ENCODE measurements at regions of chr4 and their contacts with region 1.

Region 1: GRCh38 chr4:168710353-168710946 is 213.6 kb downstream of the PALLD start:
- DNase-seq: peak; percentile 54
- H3K4me3 ChIP-seq: no peak overlapping the region
- H3K27ac ChIP-seq: no peak overlapping the region
- H3K4me1 ChIP-seq: peaks cover 33% of the 10 kb centered on the region
- H3K27me3 ChIP-seq: no peaks in the 10 kb centered on the region
- CTCF ChIP-seq: peak; percentile 49 to 74

Region 2: DNA sequence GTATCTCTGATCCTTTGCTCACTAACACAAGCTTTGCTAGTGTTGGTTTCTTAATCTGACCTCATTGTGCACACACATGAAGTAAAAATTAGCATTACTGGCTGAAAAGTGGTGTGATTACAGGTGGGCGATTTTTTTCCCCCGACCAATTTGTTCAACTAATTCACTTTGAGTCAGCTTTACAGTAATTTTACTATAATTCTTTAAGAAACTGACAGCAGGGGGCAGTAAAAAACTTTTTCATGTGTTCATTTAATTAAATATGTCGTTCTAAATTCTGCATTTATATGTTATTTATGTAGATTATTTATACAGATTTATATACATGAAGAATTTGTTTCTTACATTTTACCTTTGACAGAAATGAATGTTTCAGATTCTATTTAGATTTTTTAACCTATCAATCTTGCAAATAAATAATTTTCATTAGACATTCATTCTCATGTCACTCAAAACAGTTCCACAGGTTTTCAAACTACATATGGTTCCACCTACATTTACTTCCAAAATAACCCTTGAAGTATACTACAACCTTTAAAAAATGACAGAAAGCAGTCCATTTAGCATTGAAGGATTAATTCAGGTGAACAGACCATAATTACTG is 196.1 kb before region 1 on chr4:
- CTCF ChIA-PET with region 1: no interaction called
- dilution Hi-C with region 1: no loop called
- in situ Hi-C with region 1: no loop called
- intact Hi-C with region 1: loop called (anchors 5 kb)
- DNase-seq: peak; percentile 24
- H3K4me3 ChIP-seq: no peak overlapping the region
- H3K27ac ChIP-seq: no peak overlapping the region
- H3K4me1 ChIP-seq: no peaks in the 10 kb centered on the region
- H3K27me3 ChIP-seq: no peaks in the 10 kb centered on the region
- CTCF ChIP-seq: peak; percentile 31 to 36

Region 3: DNA sequence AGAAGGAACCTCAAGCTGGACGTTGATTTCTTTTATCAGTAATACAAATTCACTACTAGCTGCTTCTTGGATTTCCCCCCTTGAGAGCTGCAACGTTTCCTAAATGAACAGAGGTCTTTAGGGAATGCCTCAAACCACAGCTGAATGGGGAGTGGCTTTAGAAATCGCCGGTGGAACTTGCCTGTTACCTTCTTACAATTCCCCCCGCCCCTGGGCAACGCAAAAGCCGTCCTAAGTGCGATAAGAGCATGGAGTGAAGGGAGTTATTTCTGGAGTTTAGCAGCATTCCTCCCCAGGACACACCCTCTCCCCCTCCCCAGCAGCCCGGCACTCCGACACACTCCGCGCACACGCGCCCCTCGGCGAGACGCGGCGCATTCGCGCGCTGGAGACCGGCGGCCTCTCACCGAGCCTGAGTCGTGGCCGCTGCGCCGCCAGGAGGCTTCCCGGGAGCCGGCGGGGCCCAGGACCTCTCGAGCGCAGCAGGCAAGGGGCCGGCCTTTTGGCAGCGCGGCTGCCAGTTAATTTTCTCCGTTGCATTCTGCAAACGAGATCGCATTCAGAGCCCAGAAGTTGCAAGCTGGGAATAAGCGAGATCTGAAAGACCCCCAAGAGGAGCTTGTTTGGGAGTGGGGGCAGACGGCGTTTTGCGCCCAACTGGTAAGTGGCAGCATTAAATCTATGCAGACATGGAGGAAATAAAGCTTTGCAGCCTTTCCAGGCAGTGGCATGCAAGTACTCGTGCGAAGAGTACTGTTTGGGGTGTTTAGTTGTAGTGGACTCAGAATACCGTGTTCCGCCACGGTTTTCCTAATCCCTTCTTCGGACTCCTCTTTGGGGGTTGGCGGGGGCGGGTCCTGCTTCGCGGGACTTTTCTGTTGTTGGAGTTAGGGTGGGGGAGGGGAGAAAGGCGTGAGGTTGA is 78.9 kb before region 1 on chr4:
- CTCF ChIA-PET with region 1: no interaction called
- dilution Hi-C with region 1: loop called (anchors 5 kb)
- in situ Hi-C with region 1: no loop called
- intact Hi-C with region 1: loop called (anchors 5 kb)
- DNase-seq: peak; percentile 80
- H3K4me3 ChIP-seq: peak overlapping the region; percentile 56 to 62 (median 61)
- H3K27ac ChIP-seq: peak overlapping the region; percentile 66
- H3K4me1 ChIP-seq: peaks cover 48% of the 10 kb centered on the region
- H3K27me3 ChIP-seq: no peaks in the 10 kb centered on the region
- CTCF ChIP-seq: peak; percentile 19 to 53

Region 4: DNA sequence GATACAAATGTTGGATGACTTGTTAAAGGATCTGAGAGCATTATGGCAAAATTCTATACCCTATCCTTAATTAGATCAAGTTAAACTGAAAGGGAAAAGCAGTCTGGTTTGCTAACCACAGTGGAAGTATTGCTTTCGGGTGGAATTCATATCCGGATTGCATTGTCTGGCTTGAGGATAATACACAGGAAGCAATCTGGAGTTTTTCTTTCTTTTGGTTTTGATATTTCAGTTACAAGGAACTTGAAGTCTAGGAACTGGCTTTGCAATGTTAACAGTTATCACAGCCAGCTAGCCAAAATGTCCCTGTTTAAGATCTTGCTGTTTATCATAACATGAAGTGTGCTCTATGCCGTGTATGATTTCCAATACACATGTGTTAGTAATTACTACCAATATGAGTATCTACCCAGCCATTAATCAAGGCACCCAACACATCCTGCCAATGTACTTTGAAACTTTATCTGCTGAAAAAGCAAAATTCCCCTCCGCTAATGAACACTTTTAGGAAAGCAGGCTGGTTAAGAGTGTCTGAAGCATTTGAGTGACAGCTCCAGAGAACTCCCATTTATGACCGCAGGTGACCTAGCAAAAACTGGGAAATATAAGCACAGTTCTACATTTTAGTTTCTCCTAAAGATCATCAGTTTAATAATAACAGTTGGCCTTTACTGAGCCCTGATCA is 67.2 kb before region 1 on chr4:
- CTCF ChIA-PET with region 1: no interaction called
- dilution Hi-C with region 1: no loop called
- in situ Hi-C with region 1: no loop called
- intact Hi-C with region 1: no loop called
- DNase-seq: no peak
- H3K4me3 ChIP-seq: no peak overlapping the region
- H3K27ac ChIP-seq: no peak overlapping the region
- H3K4me1 ChIP-seq: no peaks in the 10 kb centered on the region
- H3K27me3 ChIP-seq: no peaks in the 10 kb centered on the region
- CTCF ChIP-seq: no peak

Region 5: DNA sequence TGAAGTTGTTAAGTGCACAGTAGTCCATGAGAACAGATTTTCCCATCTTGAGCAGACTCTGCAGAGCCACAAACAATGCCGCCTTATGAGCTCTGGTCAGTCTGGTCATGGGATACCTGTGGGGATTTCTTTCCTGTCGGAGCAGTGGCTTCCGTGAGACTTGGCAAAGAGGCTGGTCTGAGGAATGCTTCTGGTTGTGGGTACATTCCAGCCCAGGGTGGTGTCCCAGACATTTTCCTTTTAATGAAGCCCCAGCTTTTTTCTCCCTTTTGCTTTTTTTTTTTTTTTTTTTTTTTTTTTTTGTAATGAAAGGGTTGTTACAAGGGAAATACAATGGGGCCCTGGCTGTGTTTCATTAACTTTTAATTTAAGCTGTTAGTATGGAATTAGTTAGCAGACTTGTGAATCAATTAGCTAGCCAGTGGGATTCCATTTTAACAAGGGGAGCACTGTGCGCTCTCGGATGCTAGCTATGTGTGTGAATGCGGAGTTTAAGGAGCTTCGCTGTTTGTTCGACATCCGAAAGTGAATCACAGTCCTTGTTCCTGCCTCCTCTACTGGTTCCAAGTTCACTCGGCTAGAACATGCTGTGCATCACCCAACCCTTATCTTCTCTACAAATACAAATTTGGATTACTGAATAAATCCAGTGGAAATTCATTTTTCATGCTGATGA is 74.5 kb after region 1 on chr4:
- CTCF ChIA-PET with region 1: no interaction called
- dilution Hi-C with region 1: no loop called
- in situ Hi-C with region 1: no loop called
- intact Hi-C with region 1: loop called (anchors 1 kb)
- DNase-seq: peak; percentile 95
- H3K4me3 ChIP-seq: peak overlapping the region; percentile 8 to 17 (median 12)
- H3K27ac ChIP-seq: peak overlapping the region; percentile 91
- H3K4me1 ChIP-seq: peaks cover 25% of the 10 kb centered on the region
- H3K27me3 ChIP-seq: no peaks in the 10 kb centered on the region
- CTCF ChIP-seq: no peak

Region 6: DNA sequence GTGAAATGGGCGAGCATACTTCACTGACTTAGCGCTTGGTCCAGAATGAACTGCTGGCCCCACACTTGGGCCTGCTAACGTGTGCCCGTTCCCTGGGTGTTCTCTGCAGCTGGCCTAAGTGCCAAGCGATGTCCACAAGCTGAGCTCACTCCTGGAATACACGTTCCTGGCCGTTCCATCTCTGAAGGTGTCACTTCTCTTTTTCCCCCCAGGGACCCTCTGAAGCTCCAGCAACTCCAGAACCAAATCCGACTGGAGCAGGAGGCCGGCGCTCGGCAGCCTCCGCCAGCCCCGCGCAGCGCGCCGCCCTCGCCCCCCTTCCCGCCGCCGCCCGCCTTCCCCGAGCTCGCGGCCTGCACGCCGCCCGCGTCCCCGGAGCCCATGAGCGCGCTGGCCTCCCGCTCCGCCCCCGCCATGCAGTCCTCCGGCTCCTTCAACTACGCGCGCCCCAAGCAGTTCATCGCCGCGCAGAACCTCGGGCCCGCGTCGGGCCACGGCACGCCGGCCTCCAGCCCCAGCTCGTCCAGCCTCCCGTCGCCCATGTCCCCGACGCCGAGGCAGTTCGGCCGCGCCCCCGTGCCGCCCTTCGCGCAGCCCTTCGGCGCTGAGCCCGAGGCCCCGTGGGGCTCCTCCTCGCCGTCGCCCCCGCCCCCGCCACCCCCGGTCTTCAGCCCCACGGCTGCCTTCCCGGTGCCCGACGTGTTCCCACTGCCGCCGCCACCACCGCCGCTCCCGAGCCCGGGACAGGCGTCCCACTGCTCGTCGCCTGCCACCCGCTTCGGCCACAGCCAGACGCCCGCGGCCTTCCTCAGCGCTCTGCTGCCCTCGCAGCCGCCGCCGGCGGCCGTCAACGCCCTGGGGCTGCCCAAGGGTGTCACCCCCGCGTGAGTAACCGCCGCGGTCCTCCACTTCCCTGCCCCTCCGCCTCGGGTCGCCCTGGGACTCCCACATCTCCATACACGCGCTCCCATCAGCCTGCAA is 167.4 kb after region 1 on chr4:
- CTCF ChIA-PET with region 1: no interaction called
- dilution Hi-C with region 1: no loop called
- in situ Hi-C with region 1: no loop called
- intact Hi-C with region 1: loop called (anchors 5 kb)
- DNase-seq: peak; percentile 48
- H3K4me3 ChIP-seq: no peak overlapping the region
- H3K27ac ChIP-seq: no peak overlapping the region
- H3K4me1 ChIP-seq: peaks cover 26% of the 10 kb centered on the region
- H3K27me3 ChIP-seq: no peaks in the 10 kb centered on the region
- CTCF ChIP-seq: no peak

Region 7: DNA sequence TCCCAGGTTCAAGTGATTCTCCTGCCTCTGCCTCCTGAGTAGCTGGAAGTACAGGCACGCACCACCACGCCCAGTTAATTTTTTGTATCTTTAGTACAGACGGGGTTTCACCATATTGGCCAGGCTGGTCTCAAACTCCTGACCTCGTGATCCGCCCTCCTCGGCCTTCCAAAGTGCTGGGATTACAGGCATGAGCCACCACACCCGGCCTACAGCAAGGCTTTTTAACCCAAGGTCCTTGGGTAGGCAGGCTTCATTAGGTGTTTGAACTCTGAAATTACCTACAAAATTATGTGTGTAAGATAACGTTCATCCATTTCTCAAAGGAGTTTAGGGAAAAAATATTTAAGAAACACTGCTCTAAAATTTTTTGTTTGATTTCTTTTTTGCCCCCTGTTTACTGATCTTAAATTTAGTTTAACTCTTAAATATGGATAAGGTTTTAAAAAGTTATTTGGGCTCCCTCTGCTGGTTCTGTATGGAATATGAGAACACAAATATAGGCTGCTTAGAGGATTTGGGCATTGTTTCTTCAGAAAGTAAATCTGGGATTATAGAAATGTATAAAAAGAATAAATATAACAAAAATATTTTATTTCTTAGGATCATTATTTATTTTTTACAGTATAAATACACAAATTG is 206.8 kb after region 1 on chr4:
- CTCF ChIA-PET with region 1: no interaction called
- dilution Hi-C with region 1: no loop called
- in situ Hi-C with region 1: no loop called
- intact Hi-C with region 1: loop called (anchors 1 kb)
- DNase-seq: no peak
- H3K4me3 ChIP-seq: no peak overlapping the region
- H3K27ac ChIP-seq: no peak overlapping the region
- H3K4me1 ChIP-seq: no peaks in the 10 kb centered on the region
- H3K27me3 ChIP-seq: no peaks in the 10 kb centered on the region
- CTCF ChIP-seq: peak; percentile 41 to 44